Activated CD4-positive, alpha-beta memory T cell treated with anti-CD3 and anti-CD28 coated beads for 36 hours (primary cell): ENCODE measurements at regions of chr1 and their contacts with region 1.

Region 1: DNA sequence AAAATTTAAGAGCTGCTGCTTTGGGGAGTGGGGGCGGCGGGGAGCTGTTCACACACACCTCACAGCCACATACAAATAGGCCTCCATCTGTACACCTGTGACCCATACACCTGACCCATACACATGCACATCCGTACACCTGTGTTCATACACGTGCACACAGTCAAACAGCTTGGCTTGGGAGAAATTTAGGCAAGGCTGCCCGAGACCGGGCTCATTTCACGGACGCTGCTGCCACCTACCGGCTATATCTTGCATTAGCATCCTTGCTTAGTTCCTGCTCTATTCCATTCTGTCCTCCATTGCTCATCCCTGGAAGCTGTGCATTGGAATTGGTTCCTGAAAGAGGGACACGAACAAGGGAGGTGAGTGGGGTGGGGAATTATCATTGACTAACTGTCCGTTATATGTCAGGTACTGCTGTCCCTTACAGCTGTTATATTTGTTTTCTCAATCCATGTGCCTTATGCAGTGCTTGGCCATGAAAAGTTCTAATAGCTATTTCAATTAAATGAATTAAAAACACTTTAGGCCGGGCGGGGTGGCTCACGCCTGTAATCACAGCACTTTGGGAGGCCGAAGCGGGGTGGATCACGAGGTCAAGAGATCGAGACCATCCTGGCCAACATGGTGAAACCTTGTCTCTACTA is 37.1 kb upstream of the EPB41 start:
- DNase-seq: peak; percentile 85
- H3K4me3 Mint-ChIP-seq: no peak overlapping the region
- H3K27ac Mint-ChIP-seq: no peak overlapping the region
- H3K4me1 Mint-ChIP-seq: peaks cover 8% of the 10 kb centered on the region
- H3K27me3 Mint-ChIP-seq: peaks cover 6% of the 10 kb centered on the region

Region 2: DNA sequence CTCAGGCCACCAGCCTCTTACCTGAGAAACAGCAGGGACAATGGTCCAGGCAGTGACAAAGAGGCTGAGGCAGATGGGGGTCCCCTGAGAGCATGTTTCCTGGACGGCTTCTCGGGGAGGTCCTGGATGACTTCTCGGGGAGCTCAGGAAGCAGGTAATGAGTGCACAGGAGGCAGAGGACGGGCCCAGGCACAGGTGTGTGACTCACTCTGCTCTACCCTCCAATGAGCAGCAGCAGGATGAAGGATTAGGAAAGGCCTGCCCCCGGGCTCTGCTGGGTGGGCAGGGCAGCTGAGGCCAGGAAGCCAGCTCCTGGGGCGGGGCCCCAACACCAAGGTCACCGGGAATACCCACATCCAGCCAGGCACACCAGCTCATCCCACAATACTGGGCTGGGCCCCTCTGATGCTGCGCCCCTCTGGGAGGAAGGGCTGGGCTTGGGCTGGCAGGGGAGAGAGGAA is 683.5 kb before region 1 on chr1:
- CTCF ChIA-PET with region 1: no interaction called
- POLR2A ChIA-PET with region 1: no interaction called
- intact Hi-C with region 1: no loop called
- DNase-seq: no peak
- H3K4me3 Mint-ChIP-seq: no peak overlapping the region
- H3K27ac Mint-ChIP-seq: no peak overlapping the region
- H3K4me1 Mint-ChIP-seq: peaks cover 17% of the 10 kb centered on the region
- H3K27me3 Mint-ChIP-seq: no peaks in the 10 kb centered on the region

Region 3: DNA sequence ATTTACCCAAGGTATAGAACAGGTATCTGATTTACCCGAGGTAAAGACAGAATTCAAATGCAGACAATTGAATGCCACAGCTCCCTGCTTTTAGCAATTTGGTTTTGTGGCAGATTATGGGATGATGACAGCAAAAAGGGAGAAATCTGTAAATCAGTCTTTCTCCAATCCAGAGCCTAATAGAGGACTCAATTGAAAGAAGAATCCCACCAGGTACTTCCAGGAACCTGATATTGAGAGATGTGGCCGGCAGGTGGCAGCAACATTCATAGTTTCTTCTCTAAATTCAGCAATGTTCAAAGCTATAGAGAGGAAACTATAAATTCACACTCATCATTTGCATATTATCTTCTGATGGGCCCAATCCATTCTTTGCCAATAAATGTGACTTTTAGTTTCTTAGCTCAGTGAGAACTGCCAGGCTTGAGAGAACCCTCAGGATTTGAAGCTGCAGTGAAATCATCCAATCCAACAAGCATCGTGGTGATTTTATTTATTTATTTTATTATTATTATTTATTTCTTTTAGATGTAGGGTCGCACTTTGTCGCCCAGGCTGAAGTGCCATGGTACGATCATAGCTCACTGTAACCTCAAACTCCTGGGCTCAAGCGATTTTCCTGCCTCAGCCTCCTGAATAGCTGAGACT is 517.5 kb before region 1 on chr1:
- CTCF ChIA-PET with region 1: interaction called, 29 read pairs
- POLR2A ChIA-PET with region 1: no interaction called
- intact Hi-C with region 1: no loop called
- DNase-seq: peak; percentile 84
- H3K4me3 Mint-ChIP-seq: no peak overlapping the region
- H3K27ac Mint-ChIP-seq: no peak overlapping the region
- H3K4me1 Mint-ChIP-seq: no peaks in the 10 kb centered on the region
- H3K27me3 Mint-ChIP-seq: no peaks in the 10 kb centered on the region

Region 4: GRCh38 chr1:28518000-28518744 is 359.1 kb before region 1 on chr1:
- CTCF ChIA-PET with region 1: interaction called, 18 read pairs
- POLR2A ChIA-PET with region 1: interaction called, 3 read pairs
- intact Hi-C with region 1: loop called (anchors 5 kb)
- DNase-seq: peak; percentile 93
- H3K4me3 Mint-ChIP-seq: peak overlapping the region; percentile 88
- H3K27ac Mint-ChIP-seq: peak overlapping the region; percentile 93
- H3K4me1 Mint-ChIP-seq: peaks cover 41% of the 10 kb centered on the region
- H3K27me3 Mint-ChIP-seq: no peaks in the 10 kb centered on the region

Region 5: DNA sequence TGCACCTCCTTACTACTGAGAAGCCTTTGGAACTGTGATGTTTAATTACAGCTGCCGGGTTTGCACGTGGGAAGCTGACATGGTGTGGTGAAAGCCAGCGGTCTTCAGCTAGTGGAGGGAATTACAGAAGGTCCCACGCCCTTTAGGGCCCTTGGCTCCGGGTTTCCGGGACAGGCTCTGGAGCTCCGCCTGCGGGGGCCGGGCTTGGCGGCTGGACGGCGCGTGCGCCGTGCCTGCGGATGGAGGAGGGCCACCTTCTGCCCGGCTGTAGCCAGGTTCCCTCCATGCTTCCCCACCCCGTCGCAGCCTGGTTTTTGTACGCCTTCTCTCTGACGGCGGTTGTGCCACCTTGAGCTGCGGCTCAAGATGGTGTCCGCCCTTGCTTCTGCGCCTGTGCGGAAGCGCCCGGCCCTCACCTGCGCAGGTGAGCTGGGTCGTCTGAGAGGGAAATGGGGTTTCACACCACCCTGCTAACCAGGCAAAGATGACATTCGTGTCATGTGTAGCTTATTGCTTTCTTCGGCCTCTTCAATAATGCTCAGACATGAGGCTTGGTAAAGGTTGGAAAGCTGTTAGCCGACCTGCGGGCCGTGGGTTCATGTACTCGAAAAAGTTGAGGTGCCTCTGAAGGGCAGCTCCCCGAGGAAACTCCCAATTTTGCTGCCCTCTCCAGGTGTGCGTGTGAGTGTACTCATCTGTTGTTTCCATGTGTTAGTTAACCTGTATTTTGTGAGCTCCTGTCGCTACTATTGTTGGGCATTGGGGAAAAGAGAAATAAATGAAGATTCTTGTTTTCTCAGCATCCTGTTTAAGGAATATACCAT is 101.9 kb before region 1 on chr1:
- CTCF ChIA-PET with region 1: interaction called, 26 read pairs
- POLR2A ChIA-PET with region 1: interaction called, 3 read pairs
- intact Hi-C with region 1: no loop called
- DNase-seq: peak; percentile 79
- H3K4me3 Mint-ChIP-seq: peak overlapping the region; percentile 68
- H3K27ac Mint-ChIP-seq: no peak overlapping the region
- H3K4me1 Mint-ChIP-seq: peaks cover 4% of the 10 kb centered on the region
- H3K27me3 Mint-ChIP-seq: no peaks in the 10 kb centered on the region

Region 6: DNA sequence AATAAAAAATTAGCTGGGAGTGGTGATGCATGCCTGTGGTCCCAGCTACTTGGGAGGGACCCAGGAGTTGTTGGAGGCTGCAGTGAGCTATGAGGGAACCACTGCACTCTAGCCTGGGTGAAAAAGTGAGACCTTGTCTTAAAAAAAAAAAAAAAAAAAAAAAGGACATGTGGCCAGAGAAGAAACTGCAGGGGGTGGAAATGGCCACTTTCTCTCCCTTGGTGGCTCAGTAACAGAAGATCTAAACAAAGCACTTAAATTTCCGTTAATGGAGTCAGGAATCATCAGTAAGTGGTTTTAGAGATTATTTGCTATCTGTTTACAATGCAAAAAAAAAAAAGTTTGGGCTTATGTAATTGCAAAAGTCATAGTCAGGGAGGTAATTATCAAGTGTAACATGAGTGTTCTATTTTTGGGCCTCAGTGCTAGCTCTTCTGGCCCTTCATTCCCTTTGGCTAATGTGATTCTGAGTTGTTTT is 84.6 kb before region 1 on chr1:
- CTCF ChIA-PET with region 1: interaction called, 205 read pairs
- POLR2A ChIA-PET with region 1: no interaction called
- intact Hi-C with region 1: no loop called
- DNase-seq: no peak
- H3K4me3 Mint-ChIP-seq: no peak overlapping the region
- H3K27ac Mint-ChIP-seq: no peak overlapping the region
- H3K4me1 Mint-ChIP-seq: no peaks in the 10 kb centered on the region
- H3K27me3 Mint-ChIP-seq: peaks cover 10% of the 10 kb centered on the region

Region 7: GRCh38 chr1:28865997-28866650 is 11.1 kb before region 1 on chr1:
- CTCF ChIA-PET with region 1: interaction called, 28 read pairs
- POLR2A ChIA-PET with region 1: no interaction called
- intact Hi-C with region 1: no loop called
- DNase-seq: no peak
- H3K4me3 Mint-ChIP-seq: no peak overlapping the region
- H3K27ac Mint-ChIP-seq: no peak overlapping the region
- H3K4me1 Mint-ChIP-seq: no peaks in the 10 kb centered on the region
- H3K27me3 Mint-ChIP-seq: peaks cover 1% of the 10 kb centered on the region

Region 8: GRCh38 chr1:29124366-29125236 is 247.3 kb after region 1 on chr1:
- CTCF ChIA-PET with region 1: interaction called, 19 read pairs
- POLR2A ChIA-PET with region 1: no interaction called
- intact Hi-C with region 1: no loop called
- DNase-seq: peak; percentile 74
- H3K4me3 Mint-ChIP-seq: peak overlapping the region; percentile 70
- H3K27ac Mint-ChIP-seq: no peak overlapping the region
- H3K4me1 Mint-ChIP-seq: no peaks in the 10 kb centered on the region
- H3K27me3 Mint-ChIP-seq: peaks cover 18% of the 10 kb centered on the region